GM18951 (cell line): ENCODE measurements at regions of chr5 and their contacts with region 1.

Region 1: GRCh38 chr5:50962934-50963872 is 296.8 kb downstream of the PARP8 start:
- POLR2A ChIP-seq: no peak

Region 2: GRCh38 chr5:50547303-50547702 is 415.9 kb before region 1 on chr5:
- in situ Hi-C with region 1: no loop called
- POLR2A ChIP-seq: no peak

Region 3: GRCh38 chr5:50564079-50564478 is 399.1 kb before region 1 on chr5:
- in situ Hi-C with region 1: no loop called
- POLR2A ChIP-seq: no peak

Region 4: DNA sequence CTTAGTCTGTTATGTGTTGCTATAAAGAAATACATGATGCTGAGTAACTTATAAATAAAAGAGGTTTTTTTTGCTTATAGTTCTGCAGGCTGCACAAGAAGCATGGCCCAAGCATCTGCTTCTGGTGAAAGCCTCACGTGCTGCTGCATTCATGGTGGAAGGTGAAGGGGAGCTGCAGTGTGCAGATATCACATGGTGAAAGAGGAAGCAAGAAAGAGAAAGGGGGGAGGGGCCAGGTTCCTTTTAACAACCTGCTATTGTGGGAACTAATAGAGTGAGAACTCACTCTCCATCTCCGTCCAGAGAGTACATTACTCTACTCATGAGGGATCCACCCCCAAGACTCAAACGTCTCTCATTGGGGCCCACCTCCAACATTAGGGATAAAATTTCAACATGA is 309.3 kb before region 1 on chr5:
- in situ Hi-C with region 1: no loop called
- POLR2A ChIP-seq: no peak

Region 5: GRCh38 chr5:51997949-51998348 is 1034.7 kb after region 1 on chr5:
- in situ Hi-C with region 1: loop called (anchors 25 kb)
- POLR2A ChIP-seq: no peak

Region 6: DNA sequence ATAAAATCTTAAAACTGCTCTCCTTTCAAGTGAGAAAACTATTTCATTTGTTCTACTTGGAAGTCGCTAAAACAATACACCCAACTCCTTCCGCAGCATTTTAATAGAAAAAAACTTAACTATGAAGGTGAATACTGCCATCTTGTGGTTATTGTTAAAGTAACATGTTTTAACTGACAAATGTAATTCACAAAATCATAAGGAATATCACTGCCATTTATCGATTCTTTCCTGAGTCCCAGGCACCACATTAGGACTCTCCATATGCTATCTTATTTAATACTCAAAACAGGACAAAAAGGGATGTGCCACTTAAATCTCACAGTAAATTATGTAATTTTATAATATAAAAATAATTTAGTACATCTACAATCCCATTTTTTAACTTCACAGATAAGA is 1694.0 kb after region 1 on chr5:
- in situ Hi-C with region 1: loop called (anchors 25 kb)
- POLR2A ChIP-seq: no peak